Mucosa of descending colon (tissue), 3 donors: ENCODE measurements at regions of chr3 and their contacts with region 1.

Region 1: GRCh38 chr3:138812806-138813205 is 21.9 kb downstream of the PIK3CB start:
- DNase-seq: no peak
- ATAC-seq: no peak
- H3K4me3 ChIP-seq: no peak overlapping the region
- H3K4me1 ChIP-seq: peaks cover 3% of the 10 kb centered on the region
- CTCF ChIP-seq: no peak

Region 2: DNA sequence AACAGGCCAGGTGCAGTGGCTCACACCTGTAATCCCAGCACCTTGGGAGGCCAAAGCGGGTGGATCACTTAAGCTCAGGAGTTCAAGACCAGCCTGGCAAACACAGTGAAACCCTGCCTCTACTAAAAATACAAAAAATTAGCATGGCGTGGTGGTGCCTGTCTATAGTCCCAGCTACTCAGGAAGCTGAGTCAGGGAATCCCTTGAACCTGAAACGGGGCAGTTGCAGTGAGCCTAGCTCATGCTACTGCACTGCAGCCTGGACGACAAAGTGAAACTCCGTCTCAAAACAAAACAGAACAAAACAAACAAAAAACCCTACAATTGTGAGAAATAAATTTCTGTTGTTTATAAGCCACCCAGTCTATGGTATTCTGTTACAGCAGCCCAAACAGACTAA is 72.7 kb before region 1 on chr3:
- intact Hi-C with region 1: loop called in 1 of 2 experiments (anchors 5 kb)
- DNase-seq: no peak
- ATAC-seq: no peak
- H3K4me3 ChIP-seq: no peak overlapping the region
- H3K4me1 ChIP-seq: no peaks in the 10 kb centered on the region
- CTCF ChIP-seq: no peak